AG04450 (cell line): ENCODE measurements at regions of chr18 and their contacts with region 1.

Region 1: DNA sequence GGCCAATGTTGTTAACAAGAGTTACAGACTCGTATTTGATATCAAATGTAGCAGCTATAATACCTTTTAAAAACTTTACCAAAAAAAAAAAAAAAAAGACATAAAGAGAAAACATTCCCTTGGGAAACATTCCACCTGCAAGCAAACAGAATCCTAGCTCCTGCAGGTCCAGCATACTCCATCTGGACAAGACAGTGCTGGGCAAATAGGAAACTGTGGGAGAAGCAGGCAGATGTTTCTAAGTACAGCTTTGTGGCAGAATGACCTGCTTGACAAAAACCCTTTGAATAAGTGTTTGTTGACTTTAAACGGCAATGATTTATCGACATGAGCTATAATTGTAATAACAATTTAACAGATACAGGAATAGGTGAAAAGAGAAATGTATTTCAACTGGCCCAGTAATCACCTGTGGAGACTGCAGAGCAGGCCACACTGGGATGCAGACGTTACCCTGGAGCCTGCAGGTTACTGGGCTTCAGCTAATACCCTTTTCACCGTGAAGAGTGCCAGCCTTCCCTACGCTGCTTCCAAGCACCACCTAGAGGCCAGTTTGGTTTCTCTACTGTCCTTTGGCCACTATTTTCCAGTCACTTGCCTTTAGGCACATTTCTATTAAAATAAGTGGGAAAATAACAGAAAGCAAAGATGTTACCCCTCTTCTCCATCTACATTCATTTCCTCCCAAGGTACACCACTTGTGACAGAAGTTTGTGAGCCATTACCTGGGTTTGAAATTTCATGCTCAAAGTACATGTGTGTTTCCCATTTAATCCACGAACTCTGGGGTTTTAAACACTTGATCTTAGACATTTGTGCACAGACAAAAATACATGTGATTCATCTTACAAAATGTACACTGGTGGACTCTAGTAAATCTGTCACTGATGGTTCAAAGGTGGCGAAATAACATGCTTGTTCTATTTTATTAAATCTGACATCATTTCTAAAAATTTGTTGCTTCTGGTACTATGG is 96.9 kb upstream of the ZNF397 start:
- DNase-seq: peak; percentile 21
- H3K4me3 ChIP-seq: no peak overlapping the region
- H3K27ac ChIP-seq: no peak overlapping the region
- H3K27me3 ChIP-seq: no peaks in the 10 kb centered on the region
- CTCF ChIP-seq: peak; percentile 90

Region 2: DNA sequence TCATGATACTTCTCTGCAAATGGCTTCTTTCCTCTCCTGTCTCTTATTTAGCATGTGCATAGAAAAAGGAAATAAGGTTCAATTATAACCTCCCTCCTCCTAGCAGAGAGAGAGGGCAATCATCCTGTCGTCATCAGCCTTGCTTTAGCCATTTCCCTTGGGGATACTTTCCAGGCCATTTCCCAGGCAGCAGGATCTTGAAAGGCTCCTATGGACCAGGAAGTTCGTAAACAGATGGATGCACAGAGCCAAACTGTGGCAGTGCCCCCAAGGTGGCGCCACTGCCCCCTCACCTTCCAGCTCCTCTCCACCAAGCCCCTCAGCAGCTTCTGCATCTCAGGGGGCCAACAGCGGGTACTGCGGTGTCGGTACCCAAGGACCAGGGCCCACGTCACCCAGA is 276.4 kb before region 1 on chr18:
- CTCF ChIA-PET with region 1: interaction called, 61 read pairs
- POLR2A ChIA-PET with region 1: no interaction called
- DNase-seq: no peak
- H3K4me3 ChIP-seq: no peak overlapping the region
- H3K27ac ChIP-seq: no peak overlapping the region
- H3K27me3 ChIP-seq: no peaks in the 10 kb centered on the region
- CTCF ChIP-seq: peak; percentile 29; the same call in 1 of the 2 replicates

Region 3: DNA sequence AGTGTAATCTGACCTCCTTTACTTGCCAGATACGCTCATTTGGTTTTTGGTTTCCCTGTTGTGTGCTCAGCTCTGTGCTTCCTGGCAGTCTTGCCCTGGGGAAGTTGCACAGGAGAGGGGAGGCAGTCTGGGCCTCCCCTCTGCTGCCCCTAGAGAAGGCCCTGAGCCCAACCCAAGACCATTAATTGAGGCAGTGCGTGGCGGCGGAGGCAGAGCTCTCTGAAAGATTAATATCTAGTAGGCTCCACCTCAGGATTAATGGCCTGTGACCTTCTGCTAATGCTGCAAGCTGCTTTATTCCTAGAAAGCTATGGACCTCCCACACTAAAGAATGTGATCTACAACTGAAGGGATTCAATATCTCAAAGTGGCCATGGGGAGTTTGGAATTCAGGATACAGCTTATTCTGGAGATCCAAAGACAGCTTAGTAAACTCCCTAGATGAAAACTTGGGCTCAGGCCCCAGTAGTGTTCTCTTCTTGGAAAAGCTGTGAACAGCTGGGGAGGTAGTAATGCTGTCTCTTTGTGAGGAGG is 144.1 kb before region 1 on chr18:
- CTCF ChIA-PET with region 1: interaction called, 47 read pairs
- POLR2A ChIA-PET with region 1: no interaction called
- DNase-seq: no peak
- H3K4me3 ChIP-seq: no peak overlapping the region
- H3K27ac ChIP-seq: no peak overlapping the region
- H3K27me3 ChIP-seq: peaks cover 4% of the 10 kb centered on the region
- CTCF ChIP-seq: no peak

Region 4: DNA sequence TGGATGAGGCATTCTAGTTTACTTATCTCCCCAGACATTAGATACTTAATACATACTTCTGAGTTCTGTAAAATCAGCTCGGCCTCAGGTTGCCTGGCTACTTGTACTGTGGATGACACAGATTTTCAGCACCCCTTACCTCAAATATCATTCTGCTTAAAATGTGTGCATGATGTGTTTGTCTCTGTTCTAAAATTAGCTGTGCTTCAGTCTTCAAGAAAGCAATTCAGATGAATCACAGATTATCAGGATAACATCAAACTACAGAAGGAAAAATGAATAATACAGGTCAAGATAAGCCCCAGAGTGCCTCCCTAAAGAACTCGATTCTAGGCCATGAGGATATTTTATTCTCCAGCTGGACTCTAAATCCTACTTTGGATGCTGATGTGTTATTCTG is 124.0 kb before region 1 on chr18:
- CTCF ChIA-PET with region 1: interaction called, 21 read pairs
- POLR2A ChIA-PET with region 1: no interaction called
- DNase-seq: no peak
- H3K4me3 ChIP-seq: no peak overlapping the region
- H3K27ac ChIP-seq: no peak overlapping the region
- H3K27me3 ChIP-seq: peaks cover under 1% of the 10 kb centered on the region
- CTCF ChIP-seq: no peak

Region 5: DNA sequence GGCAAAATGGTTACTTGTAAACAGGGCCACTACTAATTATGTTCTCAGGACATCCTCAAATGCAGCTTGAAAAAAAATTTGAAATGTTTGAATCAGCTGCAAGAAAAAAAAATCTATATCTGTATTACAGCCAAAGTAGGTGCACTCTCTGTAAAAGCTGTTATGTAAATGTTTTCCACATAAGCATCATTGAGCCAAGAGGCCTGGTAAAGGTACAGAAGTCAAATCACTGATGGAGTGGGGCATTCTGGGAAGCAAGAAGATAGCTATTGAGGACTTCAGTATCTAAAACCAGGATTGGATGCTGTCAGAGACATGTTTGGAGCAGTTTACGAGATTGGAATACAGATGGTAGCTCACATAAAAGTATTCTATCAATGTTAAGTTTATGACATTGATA is 22.4 kb before region 1 on chr18:
- CTCF ChIA-PET with region 1: interaction called, 10 read pairs
- POLR2A ChIA-PET with region 1: no interaction called
- DNase-seq: no peak
- H3K4me3 ChIP-seq: no peak overlapping the region
- H3K27ac ChIP-seq: no peak overlapping the region
- H3K27me3 ChIP-seq: no peaks in the 10 kb centered on the region
- CTCF ChIP-seq: no peak